ENCODE measurements at regions of chr6 and their contacts with region 1.

Region 1: DNA sequence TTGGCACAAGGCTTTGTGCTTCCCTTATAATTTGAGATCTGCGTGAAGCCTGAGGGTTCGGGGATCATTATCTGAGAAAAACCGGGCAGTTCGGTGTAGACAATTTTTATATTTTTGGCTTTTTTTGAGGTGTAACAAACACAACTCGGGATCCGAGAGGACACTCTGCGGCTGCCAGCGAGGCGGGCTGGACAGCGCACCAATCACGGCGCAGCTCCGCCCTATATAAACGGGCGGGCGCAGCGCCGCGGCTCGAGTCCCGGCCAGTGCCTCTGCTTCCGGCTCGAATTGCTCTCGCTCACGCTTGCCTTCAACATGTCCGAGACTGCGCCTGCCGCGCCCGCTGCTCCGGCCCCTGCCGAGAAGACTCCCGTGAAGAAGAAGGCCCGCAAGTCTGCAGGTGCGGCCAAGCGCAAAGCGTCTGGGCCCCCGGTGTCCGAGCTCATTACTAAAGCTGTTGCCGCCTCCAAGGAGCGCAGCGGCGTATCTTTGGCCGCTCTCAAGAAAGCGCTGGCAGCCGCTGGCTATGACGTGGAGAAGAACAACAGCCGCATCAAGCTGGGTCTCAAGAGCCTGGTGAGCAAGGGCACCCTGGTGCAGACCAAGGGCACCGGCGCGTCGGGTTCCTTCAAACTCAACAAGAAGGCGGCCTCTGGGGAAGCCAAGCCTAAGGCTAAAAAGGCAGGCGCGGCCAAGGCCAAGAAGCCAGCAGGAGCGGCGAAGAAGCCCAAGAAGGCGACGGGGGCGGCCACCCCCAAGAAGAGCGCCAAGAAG is 69.0 kb downstream of the HFE start:
- DNase-seq: peak; percentile 93 to 96
- H3K4me3 ChIP-seq: peak overlapping the region; percentile 78 to 86 (median 85)
- H3K27ac ChIP-seq: peak overlapping the region; percentile 91 to 93
- H3K4me1 ChIP-seq: no peaks in the 10 kb centered on the region
- H3K27me3 ChIP-seq: no peaks in the 10 kb centered on the region
- CTCF ChIP-seq: peak; percentile 19 to 32 (median 22)
- POLR2A ChIP-seq: peak; percentile 99

Region 2: DNA sequence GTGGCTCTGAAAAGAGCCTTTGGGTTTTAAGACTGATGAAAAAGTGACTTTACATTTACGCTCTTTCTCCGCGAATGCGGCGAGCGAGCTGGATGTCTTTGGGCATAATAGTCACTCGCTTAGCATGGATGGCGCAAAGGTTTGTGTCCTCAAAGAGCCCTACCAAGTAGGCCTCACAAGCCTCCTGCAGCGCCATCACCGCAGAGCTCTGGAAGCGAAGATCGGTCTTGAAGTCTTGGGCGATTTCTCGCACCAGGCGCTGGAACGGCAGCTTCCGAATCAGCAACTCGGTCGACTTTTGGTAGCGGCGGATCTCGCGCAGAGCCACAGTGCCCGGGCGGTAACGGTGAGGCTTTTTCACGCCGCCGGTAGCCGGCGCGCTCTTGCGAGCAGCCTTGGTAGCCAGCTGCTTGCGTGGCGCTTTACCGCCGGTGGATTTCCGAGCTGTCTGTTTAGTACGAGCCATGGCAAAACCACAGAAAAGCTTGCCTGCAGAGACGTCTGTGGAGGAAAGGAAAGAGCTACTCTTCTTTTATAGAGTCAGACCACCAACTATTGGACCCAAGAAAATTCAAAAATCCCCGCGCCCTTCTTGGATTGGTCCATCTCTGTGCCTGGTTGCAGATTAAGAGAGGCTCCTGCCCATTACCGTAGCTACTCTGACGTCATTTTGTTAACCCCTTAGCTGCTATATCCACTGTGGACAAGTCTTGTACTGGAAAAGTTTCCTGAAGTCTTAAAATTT is 124.5 kb before region 1 on chr6:
- intact Hi-C with region 1: loop called (anchors 2 kb)
- DNase-seq: peak in 1 of 2 donors; percentile 81
- H3K4me3 ChIP-seq: peak overlapping the region; percentile 46 to 74 (median 61)
- H3K27ac ChIP-seq: peak overlapping the region; percentile 92 to 94
- H3K4me1 ChIP-seq: no peaks in the 10 kb centered on the region
- H3K27me3 ChIP-seq: no peaks in the 10 kb centered on the region
- CTCF ChIP-seq: peak in 1 of 3 donors; percentile 8
- POLR2A ChIP-seq: no peak

Region 3: GRCh38 chr6:26123947-26124780 is 32.1 kb before region 1 on chr6:
- intact Hi-C with region 1: loop called (anchors 1 kb)
- DNase-seq: peak; percentile 70 to 94
- H3K4me3 ChIP-seq: peak overlapping the region; percentile 75 to 96 (median 78)
- H3K27ac ChIP-seq: peak overlapping the region; percentile 96 to 99
- H3K4me1 ChIP-seq: no peaks in the 10 kb centered on the region
- H3K27me3 ChIP-seq: no peaks in the 10 kb centered on the region
- CTCF ChIP-seq: peak in 1 of 3 donors; percentile 26
- POLR2A ChIP-seq: peak; percentile 99

Region 4: GRCh38 chr6:26240154-26241032 is 84.1 kb after region 1 on chr6:
- intact Hi-C with region 1: loop called (anchors 5 kb)
- DNase-seq: peak; percentile 62 to 76
- H3K4me3 ChIP-seq: peak overlapping the region; percentile 38 to 67 (median 58)
- H3K27ac ChIP-seq: peak overlapping the region; percentile 89 to 91
- H3K4me1 ChIP-seq: no peaks in the 10 kb centered on the region
- H3K27me3 ChIP-seq: no peaks in the 10 kb centered on the region
- CTCF ChIP-seq: no peak
- POLR2A ChIP-seq: peak; percentile 48

Measured in breast epithelium (tissue), 4 donors.